B cell (primary cell): ENCODE measurements at regions of chr9 and their contacts with region 1.

Region 1: GRCh38 chr9:70352802-70353201 is 61.7 kb downstream of the KLF9 start:
- DNase-seq: peak; percentile 24
- ATAC-seq: no peak
- H3K4me3 ChIP-seq: no peak overlapping the region
- H3K4me3 Mint-ChIP-seq: no peak overlapping the region
- H3K27ac ChIP-seq: no peak overlapping the region
- H3K27ac Mint-ChIP-seq: no peak overlapping the region
- H3K4me1 ChIP-seq: no peaks in the 10 kb centered on the region
- H3K4me1 Mint-ChIP-seq: no peaks in the 10 kb centered on the region
- H3K27me3 ChIP-seq: no peaks in the 10 kb centered on the region
- H3K27me3 Mint-ChIP-seq: no peaks in the 10 kb centered on the region
- CTCF ChIP-seq: peak; percentile 75

Region 2: GRCh38 chr9:70398145-70398556 is 45.3 kb after region 1 on chr9:
- CTCF ChIA-PET with region 1: interaction called, 3 read pairs
- POLR2A ChIA-PET with region 1: no interaction called
- intact Hi-C with region 1: loop called (anchors 5 kb)
- DNase-seq: peak; percentile 81
- ATAC-seq: peak; percentile 97
- H3K4me3 ChIP-seq: peak overlapping the region in 2 of 5 experiments; percentile 1 to 26
- H3K4me3 Mint-ChIP-seq: peak overlapping the region; percentile 61
- H3K27ac ChIP-seq: peak overlapping the region; percentile 25 to 74
- H3K27ac Mint-ChIP-seq: peak overlapping the region; percentile 91
- H3K4me1 ChIP-seq: peaks cover 33 to 34% of the 10 kb centered on the region in 2 donors
- H3K4me1 Mint-ChIP-seq: peaks cover 52% of the 10 kb centered on the region
- H3K27me3 ChIP-seq: no peaks in the 10 kb centered on the region
- H3K27me3 Mint-ChIP-seq: no peaks in the 10 kb centered on the region
- CTCF ChIP-seq: no peak